IMR-90 (cell line): ENCODE measurements at regions of chr1 and their contacts with region 1.

Region 1: GRCh38 chr1:164786980-164787833 is 228.2 kb downstream of the PBX1 start:
- DNase-seq: peak; percentile 75
- ATAC-seq: peak; percentile 92
- H3K4me3 ChIP-seq: no peak overlapping the region
- H3K27ac ChIP-seq: no peak overlapping the region
- H3K4me1 ChIP-seq: peaks cover 6% of the 10 kb centered on the region; the same call in 1 of the 2 replicates
- H3K27me3 ChIP-seq: no peaks in the 10 kb centered on the region
- CTCF ChIP-seq: peak; percentile 94
- POLR2A ChIP-seq: no peak
- RAD21 ChIP-seq: peak; percentile 99

Region 2: DNA sequence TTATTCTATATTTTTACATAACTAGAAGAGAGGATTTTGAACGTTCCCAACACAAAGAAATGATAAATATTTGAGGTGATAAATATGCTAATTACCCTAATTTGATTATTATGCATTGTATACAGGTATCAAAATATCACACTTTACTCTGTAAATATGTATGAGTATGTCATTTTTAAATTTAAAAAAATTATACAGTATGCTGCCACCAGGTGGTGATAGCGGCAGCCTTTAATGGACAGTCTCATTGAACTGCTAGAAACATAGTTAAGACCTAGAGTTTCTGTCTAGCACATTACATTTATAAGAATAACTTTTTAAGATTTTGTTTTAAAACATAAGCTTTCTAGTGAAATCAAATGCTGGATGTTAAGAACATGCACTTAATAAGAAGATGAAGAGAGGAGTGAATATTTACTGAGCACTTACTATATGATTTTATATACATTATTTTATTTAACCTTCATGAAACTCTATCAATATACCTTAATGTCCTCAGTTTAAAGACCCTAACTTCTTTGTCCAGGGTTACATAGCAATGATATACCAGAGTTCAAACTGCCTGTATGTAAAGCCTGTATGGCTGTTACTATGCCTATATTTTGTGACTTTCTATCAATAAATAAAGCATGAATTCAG is 1258.4 kb before region 1 on chr1:
- CTCF ChIA-PET with region 1: no interaction called
- POLR2A ChIA-PET with region 1: no interaction called
- dilution Hi-C with region 1: no loop called
- in situ Hi-C with region 1: no loop called
- intact Hi-C with region 1: loop called (anchors 2 kb)
- DNase-seq: peak; percentile 15
- ATAC-seq: peak; percentile 74
- H3K4me3 ChIP-seq: no peak overlapping the region
- H3K27ac ChIP-seq: no peak overlapping the region
- H3K4me1 ChIP-seq: no peaks in the 10 kb centered on the region
- H3K27me3 ChIP-seq: no peaks in the 10 kb centered on the region
- CTCF ChIP-seq: peak; percentile 65
- POLR2A ChIP-seq: no peak
- RAD21 ChIP-seq: peak; percentile 46

Region 3: GRCh38 chr1:164510435-164510834 is 276.8 kb before region 1 on chr1:
- CTCF ChIA-PET with region 1: no interaction called
- POLR2A ChIA-PET with region 1: no interaction called
- dilution Hi-C with region 1: no loop called
- in situ Hi-C with region 1: no loop called
- intact Hi-C with region 1: loop called (anchors 2 kb)
- DNase-seq: peak; percentile 33
- ATAC-seq: peak; percentile 56
- H3K4me3 ChIP-seq: no peak overlapping the region
- H3K27ac ChIP-seq: no peak overlapping the region
- H3K4me1 ChIP-seq: no peaks in the 10 kb centered on the region
- H3K27me3 ChIP-seq: no peaks in the 10 kb centered on the region; the same call in 1 of the 2 replicates
- CTCF ChIP-seq: peak; percentile 45
- POLR2A ChIP-seq: no peak
- RAD21 ChIP-seq: peak; percentile 41

Region 4: DNA sequence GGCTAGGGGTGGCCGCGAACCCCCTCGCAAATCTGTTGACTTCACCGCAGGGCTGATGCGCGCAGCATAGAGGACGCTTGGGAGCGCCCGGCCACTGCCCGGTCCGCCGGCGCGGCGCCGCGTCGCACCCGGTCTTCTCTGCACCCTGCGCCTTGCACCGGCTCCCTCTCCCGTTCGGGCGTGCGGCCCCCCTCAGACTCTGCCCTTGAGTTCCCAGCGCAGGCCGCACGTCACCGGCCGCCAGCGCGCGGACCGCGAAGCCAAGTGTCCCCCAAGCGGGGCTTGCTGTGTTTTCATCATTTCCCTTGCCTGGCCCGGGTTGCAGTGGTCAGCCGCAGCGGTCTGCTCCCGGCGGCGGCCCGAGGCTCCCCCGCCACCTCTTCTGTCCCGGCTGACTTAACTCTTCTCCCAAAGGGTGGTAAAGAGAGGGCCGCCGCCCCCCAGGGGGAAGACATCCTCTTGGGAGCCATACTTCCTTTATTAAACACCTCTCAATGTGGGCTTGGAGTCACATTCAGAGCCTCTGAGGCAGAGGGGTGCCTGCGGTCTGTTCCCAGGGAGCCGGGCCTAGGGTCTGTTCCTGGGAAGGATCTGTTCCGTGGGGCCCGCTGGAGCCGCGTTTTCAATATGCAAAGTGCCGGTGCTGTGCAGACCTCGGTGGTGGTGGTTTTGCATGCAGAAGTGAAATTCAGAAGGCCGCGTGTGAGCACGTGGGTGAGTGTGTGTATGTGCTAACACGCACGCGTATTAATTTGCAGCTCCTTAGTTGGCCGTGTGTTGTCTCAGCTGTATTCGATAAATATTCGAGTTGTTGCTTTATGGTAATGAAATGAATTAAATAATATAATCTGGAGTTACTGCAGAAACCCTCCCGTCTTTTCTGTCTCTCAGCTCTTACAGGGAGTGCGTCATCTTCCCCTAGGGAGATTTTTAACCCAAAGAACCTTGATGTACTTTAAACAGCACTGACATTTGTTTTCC is 210.6 kb before region 1 on chr1:
- CTCF ChIA-PET with region 1: interaction called, 3 read pairs
- POLR2A ChIA-PET with region 1: interaction called, 3 read pairs
- dilution Hi-C with region 1: no loop called
- in situ Hi-C with region 1: no loop called
- intact Hi-C with region 1: loop called (anchors 1 kb)
- DNase-seq: peak; percentile 88
- ATAC-seq: peak; percentile 80
- H3K4me3 ChIP-seq: peak overlapping the region; percentile 10
- H3K27ac ChIP-seq: peak overlapping the region; percentile 84
- H3K4me1 ChIP-seq: peaks cover 15% of the 10 kb centered on the region
- H3K27me3 ChIP-seq: no peaks in the 10 kb centered on the region
- CTCF ChIP-seq: no peak
- POLR2A ChIP-seq: no peak
- RAD21 ChIP-seq: 0 out of 2 replicates have a peak, but pooled peaks have one; percentile 8

Region 5: DNA sequence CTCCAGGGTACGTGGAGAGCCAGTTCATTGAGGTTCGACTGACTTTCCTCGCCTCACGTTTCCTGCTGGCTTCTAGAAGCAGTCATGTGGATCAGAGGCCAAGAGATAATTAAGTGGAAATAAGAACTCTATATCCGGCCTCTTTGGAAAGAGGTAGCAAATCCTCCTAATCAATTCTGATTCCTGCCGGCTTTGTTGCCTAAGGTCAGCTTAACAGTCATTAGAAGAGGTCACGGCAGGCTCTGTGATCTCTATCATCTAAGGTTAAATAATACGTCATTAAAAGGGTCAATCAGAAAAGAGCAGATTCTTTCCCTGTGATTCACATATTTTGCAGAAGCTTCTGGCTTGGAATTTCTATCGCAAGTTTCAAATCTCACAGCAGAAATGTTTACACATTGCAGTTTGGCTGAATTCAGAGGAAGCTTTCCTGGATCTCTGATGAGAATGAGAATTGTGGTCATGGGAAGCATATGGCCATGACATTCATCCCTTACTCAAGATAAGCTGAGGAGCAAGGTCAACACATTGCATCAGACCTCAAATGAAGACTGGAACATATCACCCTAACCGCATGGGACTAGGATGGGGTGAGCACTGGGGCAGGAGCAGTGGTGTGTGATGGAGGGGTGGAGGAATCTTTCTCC is 38.8 kb before region 1 on chr1:
- CTCF ChIA-PET with region 1: interaction called, 4 read pairs
- POLR2A ChIA-PET with region 1: no interaction called
- dilution Hi-C with region 1: no loop called
- in situ Hi-C with region 1: no loop called
- intact Hi-C with region 1: loop called (anchors 1 kb)
- DNase-seq: peak; percentile 99
- ATAC-seq: peak; percentile 75
- H3K4me3 ChIP-seq: no peak overlapping the region
- H3K27ac ChIP-seq: peak overlapping the region; percentile 94
- H3K4me1 ChIP-seq: peaks cover 13% of the 10 kb centered on the region
- H3K27me3 ChIP-seq: no peaks in the 10 kb centered on the region
- CTCF ChIP-seq: no peak
- POLR2A ChIP-seq: no peak
- RAD21 ChIP-seq: peak; percentile 37; the same call in 1 of the 2 replicates